A673 (cell line): ENCODE measurements at regions of chr9 and their contacts with region 1.

Region 1: GRCh38 chr9:120418315-120418714 is 161.7 kb downstream of the CDK5RAP2 start:
- DNase-seq: no peak
- H3K4me3 ChIP-seq: no peak overlapping the region
- H3K27ac ChIP-seq: no peak overlapping the region
- H3K4me1 ChIP-seq: peaks cover 21% of the 10 kb centered on the region
- H3K27me3 ChIP-seq: no peaks in the 10 kb centered on the region
- CTCF ChIP-seq: no peak

Region 2: DNA sequence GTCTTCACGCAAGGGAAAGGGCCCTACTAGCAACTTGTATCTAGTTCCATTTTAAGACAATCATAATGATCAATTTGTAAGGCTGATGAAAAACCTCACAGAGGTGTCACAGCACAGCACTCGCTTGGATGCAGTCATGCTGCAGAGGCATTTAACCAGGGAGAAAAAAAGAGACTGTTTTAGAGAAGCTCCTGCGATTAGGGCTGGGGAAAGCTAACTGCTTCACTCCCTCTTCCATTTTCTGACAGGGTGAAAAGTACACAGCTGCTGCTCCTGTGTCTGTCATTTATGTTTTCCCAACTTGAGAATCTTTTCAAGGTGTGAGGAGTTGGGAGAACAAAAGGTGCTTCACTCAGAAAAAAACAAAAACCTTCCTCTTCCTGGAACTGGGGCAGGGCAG is 55.3 kb after region 1 on chr9:
- CTCF ChIA-PET with region 1: no interaction called
- POLR2A ChIA-PET with region 1: no interaction called
- intact Hi-C with region 1: loop called (anchors 2 kb)
- DNase-seq: no peak
- H3K4me3 ChIP-seq: no peak overlapping the region
- H3K27ac ChIP-seq: no peak overlapping the region
- H3K4me1 ChIP-seq: peaks cover 5% of the 10 kb centered on the region
- H3K27me3 ChIP-seq: no peaks in the 10 kb centered on the region
- CTCF ChIP-seq: no peak